K562 (cell line): ENCODE measurements at regions of chr18 and their contacts with region 1.

Region 1: GRCh38 chr18:36942264-36942663 is 113.3 kb downstream of the KIAA1328 start:
- DNase-seq: peak; percentile 53 to 64 (median 58)
- ATAC-seq: peak; percentile 95
- H3K4me3 ChIP-seq: no peak overlapping the region
- H3K27ac ChIP-seq: no peak overlapping the region
- H3K4me1 ChIP-seq: no peaks in the 10 kb centered on the region
- H3K27me3 ChIP-seq: no peaks in the 10 kb centered on the region
- CTCF ChIP-seq: peak; percentile 64 to 91 (median 88)
- EP300 ChIP-seq: no peak
- POLR2A ChIP-seq: no peak
- RAD21 ChIP-seq: peak; percentile 59 to 79

Region 2: GRCh38 chr18:36744261-36744876 is 197.9 kb before region 1 on chr18:
- CTCF ChIA-PET with region 1: no interaction called
- POLR2A ChIA-PET with region 1: no interaction called
- in situ Hi-C with region 1: no loop called
- intact Hi-C with region 1: no loop called
- DNase-seq: no peak
- ATAC-seq: peak; percentile 17
- H3K4me3 ChIP-seq: no peak overlapping the region
- H3K27ac ChIP-seq: no peak overlapping the region
- H3K4me1 ChIP-seq: no peaks in the 10 kb centered on the region
- H3K27me3 ChIP-seq: peaks cover 2 to 30% of the 10 kb centered on the region in 2 experiments; a peak in 4 of 5 replicates
- CTCF ChIP-seq: no peak
- EP300 ChIP-seq: no peak
- POLR2A ChIP-seq: no peak
- RAD21 ChIP-seq: no peak

Region 3: DNA sequence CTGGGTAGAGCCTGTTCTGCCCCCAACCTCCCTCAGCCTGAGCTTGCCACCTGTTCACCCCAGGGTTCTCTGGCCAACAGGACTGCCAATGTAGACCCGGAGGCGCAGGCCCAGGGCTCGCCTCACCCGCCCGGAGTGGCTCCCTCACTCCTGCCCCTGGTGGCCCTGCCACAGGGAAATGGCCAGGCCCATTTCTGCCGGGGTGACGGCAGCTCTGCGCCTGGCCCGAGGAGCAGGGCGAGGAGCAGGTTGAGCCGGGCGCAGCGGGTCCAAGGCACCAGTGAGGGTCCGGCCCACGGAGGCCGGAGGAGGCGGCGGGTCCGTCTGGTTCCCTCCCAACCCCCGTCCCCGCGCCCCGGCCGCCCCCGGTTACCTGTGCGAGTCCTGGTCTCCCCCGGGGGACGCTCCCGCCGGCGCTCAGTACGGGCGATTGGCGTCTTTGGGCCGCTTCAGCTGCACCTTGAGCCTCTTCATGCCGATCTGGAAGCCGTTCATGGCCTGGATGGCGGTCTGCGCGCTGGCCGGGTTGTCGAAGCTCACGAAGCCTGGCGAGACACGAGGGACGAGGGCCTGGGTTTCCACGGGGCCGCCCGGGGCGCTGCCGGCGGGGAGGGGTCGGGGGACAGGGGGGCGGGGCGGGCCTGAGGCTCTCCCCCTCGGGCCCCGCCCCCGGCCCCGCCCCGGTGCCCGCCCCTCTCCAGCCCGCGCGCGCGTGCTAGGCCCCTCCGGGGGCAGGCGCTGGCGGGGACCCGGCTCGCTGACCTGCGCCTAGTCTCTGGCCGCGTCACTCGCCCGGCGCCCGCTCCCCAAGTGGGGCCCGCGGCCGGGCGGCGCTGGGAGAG is 311.4 kb after region 1 on chr18:
- CTCF ChIA-PET with region 1: no interaction called
- POLR2A ChIA-PET with region 1: no interaction called
- in situ Hi-C with region 1: no loop called
- intact Hi-C with region 1: loop called (anchors 10 kb)
- DNase-seq: peak; percentile 76 to 100 (median 98)
- ATAC-seq: peak; percentile 91
- H3K4me3 ChIP-seq: peak overlapping the region; percentile 36
- H3K27ac ChIP-seq: no peak overlapping the region
- H3K4me1 ChIP-seq: peaks cover 0 to 13% of the 10 kb centered on the region in 2 experiments; a peak in 2 of 5 replicates
- H3K27me3 ChIP-seq: peaks cover 3 to 20% of the 10 kb centered on the region in 2 experiments; a peak in 4 of 5 replicates
- CTCF ChIP-seq: no peak
- EP300 ChIP-seq: no peak
- POLR2A ChIP-seq: no peak
- RAD21 ChIP-seq: no peak

Region 4: GRCh38 chr18:37299471-37300304 is 357.4 kb after region 1 on chr18:
- CTCF ChIA-PET with region 1: no interaction called
- POLR2A ChIA-PET with region 1: no interaction called
- in situ Hi-C with region 1: no loop called
- intact Hi-C with region 1: loop called (anchors 10 kb)
- DNase-seq: peak; percentile 79 to 89 (median 85)
- ATAC-seq: peak; percentile 69
- H3K4me3 ChIP-seq: no peak overlapping the region
- H3K27ac ChIP-seq: no peak overlapping the region
- H3K4me1 ChIP-seq: peaks cover 16 to 19% of the 10 kb centered on the region in 2 experiments
- H3K27me3 ChIP-seq: peaks cover 0 to 5% of the 10 kb centered on the region in 2 experiments; a peak in 1 of 5 replicates
- CTCF ChIP-seq: no peak
- EP300 ChIP-seq: peak; percentile 47; the same call in 1 of the 2 replicates
- POLR2A ChIP-seq: no peak
- RAD21 ChIP-seq: no peak

Region 5: GRCh38 chr18:37341016-37341415 is 398.8 kb after region 1 on chr18:
- CTCF ChIA-PET with region 1: no interaction called
- POLR2A ChIA-PET with region 1: no interaction called
- in situ Hi-C with region 1: no loop called
- intact Hi-C with region 1: loop called (anchors 5 kb)
- DNase-seq: no peak
- ATAC-seq: no peak
- H3K4me3 ChIP-seq: no peak overlapping the region
- H3K27ac ChIP-seq: no peak overlapping the region
- H3K4me1 ChIP-seq: no peaks in the 10 kb centered on the region
- H3K27me3 ChIP-seq: peaks cover 0 to 10% of the 10 kb centered on the region in 2 experiments; a peak in 1 of 5 replicates
- CTCF ChIP-seq: no peak
- EP300 ChIP-seq: no peak
- POLR2A ChIP-seq: no peak
- RAD21 ChIP-seq: no peak

Region 6: DNA sequence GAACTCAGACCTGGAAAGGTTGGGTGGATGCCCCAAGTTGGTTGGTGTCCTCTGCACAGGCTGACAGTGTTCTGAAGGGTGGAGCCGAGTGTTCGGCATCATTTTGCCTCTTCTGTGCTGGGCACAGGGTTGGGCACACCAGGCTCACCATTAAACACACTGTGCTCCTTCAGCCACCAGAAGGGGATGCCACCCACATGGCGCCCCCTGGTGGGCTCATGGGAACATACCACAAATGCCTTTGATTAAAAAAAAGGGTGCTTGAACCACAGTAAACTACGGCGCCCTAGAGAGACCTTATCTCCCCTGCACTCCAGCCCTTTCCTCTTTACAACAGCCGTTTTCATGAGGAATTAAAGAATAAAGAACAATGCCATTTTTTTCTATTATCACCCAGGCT is 533.9 kb after region 1 on chr18:
- CTCF ChIA-PET with region 1: interaction called, 4 read pairs
- POLR2A ChIA-PET with region 1: no interaction called
- in situ Hi-C with region 1: loop called (anchors 25 kb)
- intact Hi-C with region 1: loop called (anchors 1 kb)
- DNase-seq: peak; percentile 65 to 77 (median 74)
- ATAC-seq: peak; percentile 87
- H3K4me3 ChIP-seq: no peak overlapping the region
- H3K27ac ChIP-seq: no peak overlapping the region
- H3K4me1 ChIP-seq: no peaks in the 10 kb centered on the region
- H3K27me3 ChIP-seq: no peaks in the 10 kb centered on the region
- CTCF ChIP-seq: peak; percentile 81 to 88 (median 82)
- EP300 ChIP-seq: no peak
- POLR2A ChIP-seq: no peak
- RAD21 ChIP-seq: peak; percentile 47 to 69

Region 7: GRCh38 chr18:37537868-37538525 is 595.7 kb after region 1 on chr18:
- CTCF ChIA-PET with region 1: interaction called, 6 read pairs
- POLR2A ChIA-PET with region 1: no interaction called
- in situ Hi-C with region 1: no loop called
- intact Hi-C with region 1: loop called (anchors 2 kb)
- DNase-seq: peak; percentile 76 to 87 (median 84)
- ATAC-seq: peak; percentile 96
- H3K4me3 ChIP-seq: no peak overlapping the region
- H3K27ac ChIP-seq: no peak overlapping the region
- H3K4me1 ChIP-seq: peaks cover 0 to 5% of the 10 kb centered on the region in 2 experiments; a peak in 1 of 5 replicates
- H3K27me3 ChIP-seq: peaks cover 0 to 19% of the 10 kb centered on the region in 2 experiments; a peak in 2 of 5 replicates
- CTCF ChIP-seq: peak; percentile 77 to 82 (median 82)
- EP300 ChIP-seq: no peak
- POLR2A ChIP-seq: no peak
- RAD21 ChIP-seq: peak; percentile 49 to 70